ENCODE measurements at regions of chr17 and their contacts with region 1.

Region 1: GRCh38 chr17:17237026-17237799 is at the start of gene FLCN:
- DNase-seq: peak; percentile 98
- H3K4me3 ChIP-seq: peak within 1 kb of the TSS; percentile 89 to 100 (median 96)
- H3K27ac ChIP-seq: peak within 1 kb of the TSS; percentile 92 to 98 (median 96)
- H3K4me1 ChIP-seq: peaks cover 30 to 50% (median 45%) of the 10 kb centered on the region in 4 donors
- H3K27me3 ChIP-seq: no peaks in the 10 kb centered on the region
- CTCF ChIP-seq: no peak
- EP300 ChIP-seq: no peak
- POLR2A ChIP-seq: peak; percentile 91
- total RNA-seq, gene FLCN: 21.5 to 64.7 (median 45.5) TPM

Region 2: GRCh38 chr17:17001874-17002520 is 235.2 kb before region 1 on chr17:
- intact Hi-C with region 1: loop called (anchors 2 kb)
- DNase-seq: no peak
- H3K4me3 ChIP-seq: peak overlapping the region in 2 of 4 donors; percentile 19 to 28
- H3K27ac ChIP-seq: no peak overlapping the region
- H3K4me1 ChIP-seq: peaks cover 0 to 10% (median 9%) of the 10 kb centered on the region in 4 donors
- H3K27me3 ChIP-seq: no peaks in the 10 kb centered on the region
- CTCF ChIP-seq: peak; percentile 90 to 98 (median 95)
- EP300 ChIP-seq: no peak
- POLR2A ChIP-seq: no peak

Region 3: GRCh38 chr17:17041571-17042380 is 195.4 kb before region 1 on chr17:
- intact Hi-C with region 1: loop called (anchors 5 kb)
- DNase-seq: peak; percentile 99
- H3K4me3 ChIP-seq: peak overlapping the region; percentile 59 to 85 (median 75)
- H3K27ac ChIP-seq: peak overlapping the region; percentile 76 to 80 (median 79)
- H3K4me1 ChIP-seq: peaks cover 36 to 50% (median 45%) of the 10 kb centered on the region in 4 donors
- H3K27me3 ChIP-seq: no peaks in the 10 kb centered on the region
- CTCF ChIP-seq: no peak
- EP300 ChIP-seq: no peak
- POLR2A ChIP-seq: no peak

Region 4: DNA sequence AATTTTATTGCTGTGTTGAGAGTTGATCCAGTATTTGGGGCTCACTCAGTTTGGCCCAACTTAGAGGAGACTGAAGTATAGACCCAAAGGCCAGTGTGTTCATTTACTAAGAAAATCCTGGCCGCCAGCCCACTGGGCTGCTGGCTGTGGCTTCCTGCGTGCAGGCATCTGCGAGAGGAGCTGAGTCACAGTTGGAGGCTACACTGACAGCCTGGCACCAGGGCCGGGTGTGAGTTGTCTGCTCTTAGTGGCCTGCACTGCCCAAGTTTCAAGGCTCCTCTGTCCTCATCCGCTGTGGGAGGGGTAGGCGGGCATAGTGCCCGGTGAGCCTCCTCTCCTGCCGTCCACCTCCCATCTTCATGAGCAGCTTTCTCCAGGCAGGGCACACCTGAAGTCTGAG is 85.3 kb before region 1 on chr17:
- intact Hi-C with region 1: loop called (anchors 5 kb)
- DNase-seq: peak; percentile 95
- H3K4me3 ChIP-seq: no peak overlapping the region
- H3K27ac ChIP-seq: peak overlapping the region; percentile 66 to 79 (median 75)
- H3K4me1 ChIP-seq: peaks cover 22 to 36% (median 30%) of the 10 kb centered on the region in 4 donors
- H3K27me3 ChIP-seq: no peaks in the 10 kb centered on the region
- CTCF ChIP-seq: no peak
- EP300 ChIP-seq: no peak
- POLR2A ChIP-seq: no peak

Region 5: GRCh38 chr17:17258998-17259397 is 21.8 kb after region 1 on chr17:
- intact Hi-C with region 1: no loop called
- DNase-seq: no peak
- H3K4me3 ChIP-seq: no peak overlapping the region
- H3K27ac ChIP-seq: no peak overlapping the region
- H3K4me1 ChIP-seq: no peaks in the 10 kb centered on the region
- H3K27me3 ChIP-seq: no peaks in the 10 kb centered on the region
- CTCF ChIP-seq: no peak
- EP300 ChIP-seq: no peak
- POLR2A ChIP-seq: no peak

Region 6: DNA sequence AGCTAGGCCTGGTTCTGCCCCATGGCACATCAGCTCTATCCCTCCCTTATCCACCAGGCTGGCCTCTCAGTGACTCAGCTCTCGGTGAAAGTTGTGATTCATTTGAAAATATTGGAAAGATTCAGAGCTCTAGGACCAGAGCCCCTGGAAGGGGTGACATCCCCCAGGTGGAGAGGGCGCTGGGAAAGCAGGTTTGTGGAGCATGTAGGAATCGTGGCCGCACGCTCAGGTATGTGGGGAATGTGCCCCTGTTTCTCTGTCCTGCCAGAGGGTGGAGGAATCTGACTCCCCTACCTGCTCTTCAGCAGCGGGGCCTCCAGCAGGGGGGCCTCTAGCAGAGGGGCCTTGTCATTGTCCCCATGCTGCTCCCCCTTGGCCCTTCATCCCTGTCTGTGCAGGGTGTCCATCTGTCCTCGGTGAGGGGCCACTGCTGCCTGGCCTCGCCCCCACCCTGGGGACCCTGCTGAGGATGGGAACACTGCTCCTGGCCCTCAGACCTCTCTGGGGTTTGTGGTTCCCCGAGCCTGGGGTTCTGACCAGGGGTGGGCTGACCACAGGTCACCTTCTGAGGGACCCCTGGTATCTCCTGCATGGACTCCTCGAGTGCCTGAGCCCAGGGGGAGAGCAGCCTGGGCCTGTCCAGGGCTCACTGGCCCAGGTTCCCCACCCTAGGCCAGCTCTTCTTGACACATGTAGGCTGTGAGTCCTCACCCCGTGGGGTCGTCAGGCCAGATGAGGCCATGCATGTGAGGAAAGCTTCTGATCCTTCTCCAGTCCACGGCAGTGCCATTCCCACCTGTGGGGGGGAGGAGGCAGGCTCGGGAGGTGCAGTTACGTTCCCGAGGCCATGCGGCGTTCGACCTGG is 113.5 kb after region 1 on chr17:
- intact Hi-C with region 1: no loop called
- DNase-seq: no peak
- H3K4me3 ChIP-seq: no peak overlapping the region
- H3K27ac ChIP-seq: no peak overlapping the region
- H3K4me1 ChIP-seq: peaks cover 7 to 19% (median 13%) of the 10 kb centered on the region in 4 donors
- H3K27me3 ChIP-seq: peaks cover 0 to 47% (median 2%) of the 10 kb centered on the region in 4 donors
- CTCF ChIP-seq: no peak
- EP300 ChIP-seq: no peak
- POLR2A ChIP-seq: no peak

Measured in esophagus muscularis mucosa (tissue), 4 donors.